ENCODE measurements at regions of chr7 and their contacts with region 1.

Region 1: DNA sequence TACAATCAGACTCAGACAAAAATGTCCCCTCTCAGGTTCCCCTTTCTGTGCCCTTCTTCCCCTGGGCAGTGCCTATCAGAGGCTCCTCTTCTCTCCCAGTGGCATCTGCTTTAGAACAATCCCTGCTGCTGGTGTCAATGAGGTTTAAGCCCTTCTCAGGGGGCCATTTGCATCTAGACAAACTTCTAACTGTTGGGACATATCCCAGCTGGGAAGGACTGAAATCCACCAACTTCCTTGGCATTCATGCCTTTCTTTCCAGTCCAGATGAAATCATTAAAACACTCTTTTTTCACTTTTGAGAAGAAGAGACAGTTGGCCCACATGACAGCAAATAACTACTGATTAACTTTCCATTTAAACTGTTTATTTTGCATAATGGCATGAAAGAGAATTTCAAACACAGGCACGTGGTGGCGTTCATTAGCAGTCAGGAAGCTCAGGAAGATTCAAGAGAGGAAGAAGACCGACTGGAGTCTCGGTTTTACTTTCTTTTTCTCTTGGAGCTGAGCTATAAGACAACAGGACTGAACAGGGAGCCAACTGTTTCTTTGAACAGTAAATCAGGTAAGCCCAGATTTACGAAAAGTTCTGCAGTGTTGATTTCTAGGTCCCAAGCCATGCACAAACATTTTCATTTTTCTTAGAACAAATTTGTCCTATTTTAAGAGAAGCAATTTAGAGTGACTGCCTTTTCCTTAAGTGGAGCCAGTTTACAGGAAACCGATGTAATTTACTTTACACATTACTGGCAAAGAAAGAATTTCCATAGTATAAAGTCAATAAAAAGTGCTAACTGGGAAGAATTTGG is at the start of gene GIMAP2:
- DNase-seq: peak in 9 of 14 experiments; percentile 22 to 81 (median 48)
- ATAC-seq: peak; percentile 86
- H3K4me3 ChIP-seq: peak within 1 kb of the TSS; percentile 80
- H3K4me3 Mint-ChIP-seq: peak within 1 kb of the TSS; percentile 100
- H3K27ac ChIP-seq: peak within 1 kb of the TSS; percentile 78 to 95
- H3K27ac Mint-ChIP-seq: peak within 1 kb of the TSS; percentile 100
- H3K4me1 ChIP-seq: peaks cover 44% of the 10 kb centered on the region
- H3K4me1 Mint-ChIP-seq: peaks cover 85% of the 10 kb centered on the region
- H3K27me3 ChIP-seq: no peaks in the 10 kb centered on the region
- H3K27me3 Mint-ChIP-seq: no peaks in the 10 kb centered on the region
- CTCF ChIP-seq: no peak
- total RNA-seq, gene GIMAP2: 64.1 to 65.1 TPM

Region 2: GRCh38 chr7:150481186-150481920 is 204.1 kb before region 1 on chr7:
- CTCF ChIA-PET with region 1: no interaction called
- POLR2A ChIA-PET with region 1: interaction called, 14 read pairs
- intact Hi-C with region 1: no loop called
- DNase-seq: peak; percentile 36 to 90 (median 58)
- ATAC-seq: peak; percentile 59
- H3K4me3 ChIP-seq: peak overlapping the region; percentile 20
- H3K4me3 Mint-ChIP-seq: peak overlapping the region; percentile 84
- H3K27ac ChIP-seq: peak overlapping the region; percentile 92 to 95
- H3K27ac Mint-ChIP-seq: peak overlapping the region; percentile 97
- H3K4me1 ChIP-seq: peaks cover 76% of the 10 kb centered on the region
- H3K4me1 Mint-ChIP-seq: peaks cover 95% of the 10 kb centered on the region
- H3K27me3 ChIP-seq: no peaks in the 10 kb centered on the region
- H3K27me3 Mint-ChIP-seq: no peaks in the 10 kb centered on the region
- CTCF ChIP-seq: no peak

Region 3: DNA sequence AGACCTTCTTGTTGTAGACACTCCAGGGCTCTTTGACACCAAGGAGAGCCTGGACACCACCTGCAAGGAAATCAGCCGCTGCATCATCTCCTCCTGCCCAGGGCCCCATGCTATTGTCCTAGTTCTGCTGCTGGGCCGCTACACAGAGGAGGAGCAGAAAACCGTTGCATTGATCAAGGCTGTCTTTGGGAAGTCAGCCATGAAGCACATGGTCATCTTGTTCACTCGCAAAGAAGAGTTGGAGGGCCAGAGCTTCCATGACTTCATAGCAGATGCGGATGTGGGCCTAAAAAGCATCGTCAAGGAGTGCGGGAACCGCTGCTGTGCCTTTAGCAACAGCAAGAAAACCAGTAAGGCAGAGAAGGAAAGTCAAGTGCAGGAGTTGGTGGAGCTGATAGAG is 165.3 kb before region 1 on chr7:
- CTCF ChIA-PET with region 1: no interaction called
- POLR2A ChIA-PET with region 1: interaction called, 36 read pairs
- intact Hi-C with region 1: loop called in 1 of 2 experiments (anchors 2 kb)
- DNase-seq: peak in 9 of 14 experiments; percentile 23 to 59 (median 47)
- ATAC-seq: peak; percentile 33
- H3K4me3 ChIP-seq: peak overlapping the region; percentile 79
- H3K4me3 Mint-ChIP-seq: peak overlapping the region; percentile 100
- H3K27ac ChIP-seq: peak overlapping the region; percentile 59 to 60
- H3K27ac Mint-ChIP-seq: peak overlapping the region; percentile 93
- H3K4me1 ChIP-seq: peaks cover 12% of the 10 kb centered on the region
- H3K4me1 Mint-ChIP-seq: peaks cover 36% of the 10 kb centered on the region
- H3K27me3 ChIP-seq: no peaks in the 10 kb centered on the region
- H3K27me3 Mint-ChIP-seq: no peaks in the 10 kb centered on the region
- CTCF ChIP-seq: no peak

Region 4: GRCh38 chr7:150626696-150627095 is 58.7 kb before region 1 on chr7:
- CTCF ChIA-PET with region 1: interaction called, 6 read pairs
- POLR2A ChIA-PET with region 1: interaction called, 39 read pairs
- intact Hi-C with region 1: no loop called
- DNase-seq: no peak
- ATAC-seq: no peak
- H3K4me3 ChIP-seq: no peak overlapping the region
- H3K4me3 Mint-ChIP-seq: peak overlapping the region; percentile 25
- H3K27ac ChIP-seq: peak overlapping the region; percentile 29 to 38
- H3K27ac Mint-ChIP-seq: peak overlapping the region; percentile 79
- H3K4me1 ChIP-seq: peaks cover 56% of the 10 kb centered on the region
- H3K4me1 Mint-ChIP-seq: peaks cover 84% of the 10 kb centered on the region
- H3K27me3 ChIP-seq: no peaks in the 10 kb centered on the region
- H3K27me3 Mint-ChIP-seq: no peaks in the 10 kb centered on the region
- CTCF ChIP-seq: no peak

Region 5: DNA sequence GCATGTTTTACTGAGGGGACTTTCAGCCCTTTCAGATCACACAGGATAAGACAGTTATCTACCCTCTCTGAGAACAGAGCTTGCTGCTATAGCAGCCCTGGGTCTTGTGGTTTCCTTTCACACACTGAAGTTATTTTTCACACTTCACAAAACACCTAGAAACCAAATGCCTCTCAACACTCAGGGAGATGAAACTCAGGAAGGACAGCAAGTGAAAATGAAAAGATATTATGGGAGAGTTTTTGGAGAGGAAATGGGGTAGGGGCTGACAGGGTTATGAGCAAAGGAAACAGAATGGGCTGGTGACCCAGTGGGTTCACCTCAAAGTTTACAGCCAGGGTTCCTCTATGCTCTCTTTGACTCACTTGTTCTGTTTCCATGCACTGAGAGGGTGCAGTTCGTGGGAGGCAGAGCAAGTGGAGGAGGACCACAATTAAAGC is 16.9 kb before region 1 on chr7:
- CTCF ChIA-PET with region 1: interaction called, 4 read pairs
- POLR2A ChIA-PET with region 1: interaction called, 34 read pairs
- intact Hi-C with region 1: loop called in 1 of 2 experiments (anchors 2 kb)
- DNase-seq: peak in 13 of 14 experiments; percentile 34 to 92 (median 51)
- ATAC-seq: peak; percentile 82
- H3K4me3 ChIP-seq: peak overlapping the region; percentile 4
- H3K4me3 Mint-ChIP-seq: peak overlapping the region; percentile 49
- H3K27ac ChIP-seq: peak overlapping the region; percentile 73 to 85
- H3K27ac Mint-ChIP-seq: peak overlapping the region; percentile 91
- H3K4me1 ChIP-seq: peaks cover 70% of the 10 kb centered on the region
- H3K4me1 Mint-ChIP-seq: peaks cover 94% of the 10 kb centered on the region
- H3K27me3 ChIP-seq: no peaks in the 10 kb centered on the region
- H3K27me3 Mint-ChIP-seq: no peaks in the 10 kb centered on the region
- CTCF ChIP-seq: no peak

Region 6: GRCh38 chr7:150695654-150696053 is 10.2 kb after region 1 on chr7:
- CTCF ChIA-PET with region 1: interaction called, 3 read pairs
- POLR2A ChIA-PET with region 1: interaction called, 16 read pairs
- intact Hi-C with region 1: no loop called
- DNase-seq: no peak
- ATAC-seq: no peak
- H3K4me3 ChIP-seq: no peak overlapping the region
- H3K4me3 Mint-ChIP-seq: no peak overlapping the region
- H3K27ac ChIP-seq: no peak overlapping the region
- H3K27ac Mint-ChIP-seq: no peak overlapping the region
- H3K4me1 ChIP-seq: peaks cover 16% of the 10 kb centered on the region
- H3K4me1 Mint-ChIP-seq: peaks cover 16% of the 10 kb centered on the region
- H3K27me3 ChIP-seq: no peaks in the 10 kb centered on the region
- H3K27me3 Mint-ChIP-seq: no peaks in the 10 kb centered on the region
- CTCF ChIP-seq: no peak

Region 7: GRCh38 chr7:150737265-150738055 is 52.0 kb after region 1 on chr7 and contains the start of gene GIMAP5:
- CTCF ChIA-PET with region 1: interaction called, 3 read pairs
- POLR2A ChIA-PET with region 1: interaction called, 22 read pairs
- intact Hi-C with region 1: loop called (anchors 5 kb)
- DNase-seq: peak in 12 of 14 experiments; percentile 29 to 78 (median 70)
- ATAC-seq: peak; percentile 75
- H3K4me3 ChIP-seq: peak within 1 kb of the TSS; percentile 65
- H3K4me3 Mint-ChIP-seq: peak within 1 kb of the TSS; percentile 96
- H3K27ac ChIP-seq: peak within 1 kb of the TSS; percentile 80 to 87
- H3K27ac Mint-ChIP-seq: peak within 1 kb of the TSS; percentile 87
- H3K4me1 ChIP-seq: peaks cover 59% of the 10 kb centered on the region
- H3K4me1 Mint-ChIP-seq: peaks cover 74% of the 10 kb centered on the region
- H3K27me3 ChIP-seq: no peaks in the 10 kb centered on the region
- H3K27me3 Mint-ChIP-seq: no peaks in the 10 kb centered on the region
- CTCF ChIP-seq: no peak
- total RNA-seq, gene GIMAP5: 31.3 to 35.2 TPM

Region 8: GRCh38 chr7:150927956-150928344 is 242.5 kb after region 1 on chr7:
- CTCF ChIA-PET with region 1: no interaction called
- POLR2A ChIA-PET with region 1: no interaction called
- intact Hi-C with region 1: no loop called
- DNase-seq: no peak
- ATAC-seq: no peak
- H3K4me3 ChIP-seq: no peak overlapping the region
- H3K4me3 Mint-ChIP-seq: no peak overlapping the region
- H3K27ac ChIP-seq: no peak overlapping the region
- H3K27ac Mint-ChIP-seq: no peak overlapping the region
- H3K4me1 ChIP-seq: peaks cover 22% of the 10 kb centered on the region
- H3K4me1 Mint-ChIP-seq: peaks cover 30% of the 10 kb centered on the region
- H3K27me3 ChIP-seq: peaks cover 0 to 5% of the 10 kb centered on the region in 2 experiments
- H3K27me3 Mint-ChIP-seq: no peaks in the 10 kb centered on the region
- CTCF ChIP-seq: no peak

Region 9: DNA sequence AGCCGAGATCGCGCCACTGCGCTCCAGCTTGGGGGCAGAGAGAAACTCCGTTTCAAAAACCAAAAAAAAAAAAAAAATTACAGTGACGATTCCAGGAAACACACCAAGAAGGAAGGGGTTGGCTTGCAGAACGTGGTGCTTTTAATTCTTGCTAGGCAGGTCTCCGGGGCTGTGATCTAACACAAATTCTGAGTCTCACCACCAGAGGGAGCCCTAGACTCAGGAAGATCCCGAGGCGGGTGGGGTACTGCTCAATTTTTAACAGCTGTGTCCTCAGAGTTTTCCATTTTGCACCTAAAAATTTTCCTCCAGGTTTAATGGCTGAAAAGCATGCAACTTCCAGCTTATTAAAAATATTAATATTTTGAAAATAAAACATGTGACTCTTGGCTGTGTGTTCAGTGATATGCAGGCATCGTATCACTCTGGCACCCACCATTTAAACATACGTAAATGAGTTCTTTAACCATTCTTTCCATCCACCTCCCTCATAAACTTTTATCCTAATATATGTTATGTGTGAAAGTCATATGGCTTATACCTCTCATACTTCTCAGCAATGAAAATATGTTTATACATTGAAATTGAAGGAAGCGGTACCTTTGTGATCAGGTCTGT is 629.7 kb after region 1 on chr7:
- CTCF ChIA-PET with region 1: no interaction called
- POLR2A ChIA-PET with region 1: no interaction called
- intact Hi-C with region 1: no loop called
- DNase-seq: peak; percentile 60 to 90 (median 74)
- ATAC-seq: peak; percentile 95
- H3K4me3 ChIP-seq: no peak overlapping the region
- H3K4me3 Mint-ChIP-seq: no peak overlapping the region
- H3K27ac ChIP-seq: no peak overlapping the region
- H3K27ac Mint-ChIP-seq: no peak overlapping the region
- H3K4me1 ChIP-seq: peaks cover 9% of the 10 kb centered on the region
- H3K4me1 Mint-ChIP-seq: peaks cover 9% of the 10 kb centered on the region
- H3K27me3 ChIP-seq: no peaks in the 10 kb centered on the region
- H3K27me3 Mint-ChIP-seq: no peaks in the 10 kb centered on the region
- CTCF ChIP-seq: peak; percentile 93